Panc1 (cell line): ENCODE measurements at regions of chr11 and their contacts with region 1.

Region 1: GRCh38 chr11:27411330-27411729 is 48.3 kb upstream of the CCDC34 start:
- DNase-seq: no peak
- ATAC-seq: no peak
- H3K4me3 ChIP-seq: no peak overlapping the region
- H3K27ac ChIP-seq: no peak overlapping the region
- H3K4me1 ChIP-seq: peaks cover 22% of the 10 kb centered on the region
- H3K27me3 ChIP-seq: no peaks in the 10 kb centered on the region
- CTCF ChIP-seq: no peak

Region 2: GRCh38 chr11:27362749-27363575 is 48.4 kb before region 1 on chr11 and contains the start of gene CCDC34:
- CTCF ChIA-PET with region 1: no interaction called
- POLR2A ChIA-PET with region 1: no interaction called
- in situ Hi-C with region 1: no loop called
- intact Hi-C with region 1: no loop called
- DNase-seq: peak; percentile 46
- ATAC-seq: peak; percentile 99
- H3K4me3 ChIP-seq: peak within 1 kb of the TSS; percentile 63 to 79
- H3K27ac ChIP-seq: peak within 1 kb of the TSS; percentile 95
- H3K4me1 ChIP-seq: peaks cover 33% of the 10 kb centered on the region
- H3K27me3 ChIP-seq: no peaks in the 10 kb centered on the region
- CTCF ChIP-seq: no peak
- total RNA-seq, gene CCDC34: 28.3 TPM

Region 3: DNA sequence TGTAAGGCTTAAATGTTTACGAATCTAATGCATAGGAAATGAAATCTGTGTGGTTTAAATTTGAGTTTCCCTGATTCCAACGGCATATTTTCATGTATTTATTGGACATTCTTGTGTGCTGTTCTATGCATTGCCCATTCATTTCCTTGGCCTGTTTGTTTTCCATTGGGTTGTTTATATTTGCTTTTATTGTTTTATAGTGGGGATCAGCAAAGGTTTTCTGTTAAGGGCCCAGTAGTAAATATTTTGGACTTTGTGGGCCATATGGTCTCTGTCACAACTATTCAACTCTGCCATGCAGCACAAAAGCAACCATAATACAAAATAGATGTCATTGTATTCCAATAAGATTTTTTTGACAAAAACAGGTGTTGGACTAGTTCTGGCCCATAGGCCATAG is 66.5 kb after region 1 on chr11:
- CTCF ChIA-PET with region 1: interaction called, 13 read pairs
- POLR2A ChIA-PET with region 1: interaction called, 18 read pairs
- in situ Hi-C with region 1: no loop called
- intact Hi-C with region 1: no loop called
- DNase-seq: no peak
- ATAC-seq: peak; percentile 74
- H3K4me3 ChIP-seq: no peak overlapping the region
- H3K27ac ChIP-seq: peak overlapping the region; percentile 60
- H3K4me1 ChIP-seq: peaks cover 12% of the 10 kb centered on the region
- H3K27me3 ChIP-seq: no peaks in the 10 kb centered on the region
- CTCF ChIP-seq: no peak

Region 4: GRCh38 chr11:27735281-27735680 is 324.0 kb after region 1 on chr11:
- CTCF ChIA-PET with region 1: no interaction called
- POLR2A ChIA-PET with region 1: no interaction called
- in situ Hi-C with region 1: no loop called
- intact Hi-C with region 1: no loop called
- DNase-seq: no peak
- ATAC-seq: no peak
- H3K4me3 ChIP-seq: no peak overlapping the region
- H3K27ac ChIP-seq: no peak overlapping the region
- H3K4me1 ChIP-seq: no peaks in the 10 kb centered on the region
- H3K27me3 ChIP-seq: no peaks in the 10 kb centered on the region; the same call in 1 of the 2 replicates
- CTCF ChIP-seq: no peak